ENCODE measurements at regions of chr20 and their contacts with region 1.

Region 1: GRCh38 chr20:23207826-23208540 is 121.9 kb upstream of the CD93 start:
- DNase-seq: no peak
- ATAC-seq: no peak
- H3K4me3 ChIP-seq: no peak overlapping the region
- H3K27ac ChIP-seq: no peak overlapping the region
- H3K4me1 ChIP-seq: peaks cover 13 to 53% (median 37%) of the 10 kb centered on the region in 9 donors
- H3K27me3 ChIP-seq: no peaks in the 10 kb centered on the region
- CTCF ChIP-seq: no peak

Region 2: GRCh38 chr20:23225407-23226072 is 17.6 kb after region 1 on chr20:
- intact Hi-C with region 1: loop called in 1 of 10 experiments (anchors 2 kb)
- DNase-seq: no peak
- ATAC-seq: peak in 7 of 8 donors; percentile 26 to 86 (median 59)
- H3K4me3 ChIP-seq: no peak overlapping the region
- H3K27ac ChIP-seq: peak overlapping the region in 1 of 10 donors; percentile 24
- H3K4me1 ChIP-seq: peaks cover 0 to 30% (median 9%) of the 10 kb centered on the region in 9 donors
- H3K27me3 ChIP-seq: peaks cover 0 to 4% (median 0%) of the 10 kb centered on the region in 7 donors
- CTCF ChIP-seq: no peak